ENCODE measurements at regions of chr19 and their contacts with region 1.

Region 1: DNA sequence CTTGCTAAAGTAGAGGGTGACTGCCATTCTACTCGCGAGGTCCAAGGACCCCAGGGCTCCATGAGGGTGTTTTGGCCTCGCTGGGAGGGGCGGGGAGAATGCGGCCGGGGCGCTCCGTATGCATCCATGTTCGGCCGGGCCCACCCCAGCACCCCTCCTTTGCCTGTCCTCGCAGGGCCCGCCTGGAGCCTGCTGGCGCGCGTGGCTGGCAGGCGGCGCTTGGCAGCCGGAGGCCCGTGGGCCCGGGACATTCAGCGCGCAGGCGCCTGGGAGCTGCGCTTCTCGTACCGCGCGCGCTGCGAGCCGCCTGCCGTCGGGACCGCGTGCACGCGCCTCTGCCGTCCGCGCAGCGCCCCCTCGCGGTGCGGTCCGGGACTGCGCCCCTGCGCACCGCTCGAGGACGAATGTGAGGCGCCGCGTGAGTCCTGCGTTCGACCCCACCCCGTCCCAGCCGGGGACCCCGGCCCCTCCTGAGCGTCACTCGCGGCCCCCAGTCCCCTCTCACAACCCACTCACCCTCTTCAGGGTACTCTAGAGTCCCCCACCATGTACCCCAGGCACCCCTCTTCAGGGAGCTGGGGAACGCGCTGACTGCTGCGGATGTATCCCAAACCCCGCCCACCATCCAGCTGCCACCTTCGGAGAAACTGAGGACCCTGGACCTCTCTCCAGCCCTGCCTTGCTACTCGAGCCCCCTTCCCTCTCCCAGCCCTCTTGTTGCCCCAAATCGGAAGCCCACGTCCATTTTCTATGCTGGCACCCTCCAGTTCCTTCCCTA is 4.1 kb downstream of the DLL3 start:
- DNase-seq: peak; percentile 88 to 91 (median 90)
- ATAC-seq: peak; percentile 68
- H3K4me3 ChIP-seq: peak overlapping the region; percentile 33
- H3K27ac ChIP-seq: peak overlapping the region; percentile 50; the same call in 2 of the 3 replicates
- H3K4me1 ChIP-seq: peaks cover 19 to 47% of the 10 kb centered on the region in 2 experiments
- H3K27me3 ChIP-seq: no peaks in the 10 kb centered on the region
- CTCF ChIP-seq: peak; percentile 69 to 94 (median 82)
- EP300 ChIP-seq: no peak
- POLR2A ChIP-seq: no peak
- RAD21 ChIP-seq: peak; percentile 35 to 64; a peak in 3 of 4 replicates

Region 2: DNA sequence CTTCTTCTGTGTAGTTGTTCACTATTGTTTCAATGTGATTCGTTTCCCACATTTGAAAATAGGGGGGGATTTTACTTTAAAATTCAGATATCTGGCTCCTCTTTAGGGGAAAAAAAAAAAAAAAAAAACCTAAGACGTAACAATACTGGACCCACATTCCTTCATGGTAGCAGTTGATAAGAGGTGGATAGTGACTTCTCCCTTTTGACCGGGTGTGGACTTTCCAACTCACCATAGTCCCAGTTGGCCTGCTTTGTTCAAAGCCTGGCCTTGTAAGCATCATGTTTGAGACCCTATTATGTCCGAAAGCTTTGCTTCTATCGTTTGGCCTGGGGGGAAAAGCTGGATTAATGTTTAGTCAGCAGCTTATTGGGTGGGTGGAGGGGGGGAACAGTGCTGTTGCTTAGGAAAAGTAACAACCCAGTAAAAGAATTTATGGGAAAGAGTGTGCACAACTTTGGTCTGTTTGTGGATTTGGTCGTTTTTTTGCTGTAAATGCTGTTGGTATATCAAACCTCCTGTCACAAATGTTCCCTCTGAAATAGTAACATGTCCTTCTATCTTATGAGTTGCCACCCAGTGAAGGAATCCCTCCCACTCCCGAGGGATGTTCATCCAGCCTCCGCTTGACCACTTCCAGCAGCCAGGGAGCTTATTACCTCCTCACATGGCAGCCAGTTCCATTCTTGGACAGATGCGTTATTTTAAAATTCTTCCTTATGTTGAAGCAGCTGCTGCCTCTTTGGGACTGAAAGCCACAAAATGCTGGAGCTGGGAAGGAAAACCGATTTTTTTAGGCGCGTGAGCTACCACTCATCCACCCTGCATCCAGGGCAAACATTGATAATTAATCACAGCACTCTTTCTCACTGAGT is 150.2 kb before region 1 on chr19:
- CTCF ChIA-PET with region 1: no interaction called
- POLR2A ChIA-PET with region 1: no interaction called
- in situ Hi-C with region 1: no loop called
- intact Hi-C with region 1: no loop called
- DNase-seq: peak in 1 of 4 experiments; percentile 34
- ATAC-seq: no peak
- H3K4me3 ChIP-seq: no peak overlapping the region
- H3K27ac ChIP-seq: no peak overlapping the region
- H3K4me1 ChIP-seq: peaks cover 25 to 64% of the 10 kb centered on the region in 2 experiments
- H3K27me3 ChIP-seq: no peaks in the 10 kb centered on the region
- CTCF ChIP-seq: no peak
- EP300 ChIP-seq: no peak
- POLR2A ChIP-seq: no peak
- RAD21 ChIP-seq: no peak

Region 3: DNA sequence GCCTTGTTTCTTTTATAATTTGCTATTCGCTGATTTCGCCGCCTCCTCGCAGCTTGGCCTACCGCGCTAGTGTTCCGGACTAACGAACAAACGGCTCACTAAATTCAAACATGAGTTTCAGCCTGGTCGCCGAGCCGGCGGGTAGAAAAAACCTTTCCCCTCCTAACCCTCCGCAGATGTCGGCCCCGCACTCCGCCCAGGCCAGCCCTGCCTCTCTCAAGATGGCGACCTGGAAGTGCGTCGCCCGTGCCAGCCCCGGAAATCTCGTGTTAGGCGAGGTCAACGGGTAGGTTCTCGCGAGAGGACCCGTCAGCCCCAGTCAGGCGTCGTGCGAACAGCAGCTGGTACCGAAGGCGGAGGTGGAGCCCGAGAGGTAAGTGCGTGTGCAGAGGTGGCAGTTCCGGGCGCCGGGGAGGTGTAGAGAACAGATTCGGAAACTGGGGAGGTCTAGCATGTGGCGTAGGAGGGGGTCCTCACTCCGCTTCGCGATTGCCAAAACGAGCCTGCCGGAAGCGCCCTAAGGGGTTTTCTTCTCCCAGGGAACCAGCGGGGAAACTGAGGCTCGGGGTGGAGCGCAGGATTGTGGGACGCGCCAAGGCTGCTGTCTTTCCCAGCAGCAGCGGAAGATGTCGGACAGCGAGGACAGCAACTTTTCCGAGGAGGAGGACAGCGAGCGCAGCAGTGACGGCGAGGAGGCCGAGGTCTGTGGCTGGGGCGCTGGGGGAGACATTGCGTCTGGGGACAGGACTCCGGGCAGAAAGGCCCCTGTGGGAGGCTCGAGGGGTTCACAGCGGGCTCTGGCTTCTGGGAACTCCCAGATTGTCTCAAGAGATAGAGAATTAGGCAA is 57.3 kb before region 1 on chr19 and contains the start of gene SUPT5H:
- CTCF ChIA-PET with region 1: interaction called, 3 read pairs
- POLR2A ChIA-PET with region 1: interaction called, 4 read pairs
- in situ Hi-C with region 1: no loop called
- intact Hi-C with region 1: loop called (anchors 2 kb)
- DNase-seq: peak; percentile 95 to 99 (median 96)
- ATAC-seq: peak; percentile 99
- H3K4me3 ChIP-seq: peak within 1 kb of the TSS; percentile 71
- H3K27ac ChIP-seq: peak within 1 kb of the TSS; percentile 72
- H3K4me1 ChIP-seq: peaks cover 2 to 22% of the 10 kb centered on the region in 2 experiments; a peak in 3 of 5 replicates
- H3K27me3 ChIP-seq: no peaks in the 10 kb centered on the region
- CTCF ChIP-seq: peak in 1 of 3 experiments; percentile 28; a peak in 1 of 6 replicates
- EP300 ChIP-seq: peak; percentile 41; the same call in 1 of the 2 replicates
- POLR2A ChIP-seq: peak; percentile 88
- RAD21 ChIP-seq: no peak
- polyA plus RNA-seq, gene SUPT5H: 13.3 to 18.8 TPM

Region 4: GRCh38 chr19:39480337-39481228 is 22.2 kb before region 1 on chr19 and contains the start of gene TIMM50:
- CTCF ChIA-PET with region 1: no interaction called
- POLR2A ChIA-PET with region 1: interaction called, 15 read pairs
- in situ Hi-C with region 1: no loop called
- intact Hi-C with region 1: loop called (anchors 2 kb)
- DNase-seq: peak; percentile 91 to 100 (median 94)
- ATAC-seq: peak; percentile 96
- H3K4me3 ChIP-seq: peak within 1 kb of the TSS; percentile 94
- H3K27ac ChIP-seq: peak within 1 kb of the TSS; percentile 92
- H3K4me1 ChIP-seq: peaks cover 10 to 17% of the 10 kb centered on the region in 2 experiments; a peak in 4 of 5 replicates
- H3K27me3 ChIP-seq: no peaks in the 10 kb centered on the region
- CTCF ChIP-seq: peak; percentile 21 to 32 (median 30); a peak in 2 of 6 replicates
- EP300 ChIP-seq: peak; percentile 61
- POLR2A ChIP-seq: peak; percentile 88
- RAD21 ChIP-seq: no peak; a peak in 1 of 4 replicates
- polyA plus RNA-seq, gene TIMM50: 28.3 to 55.4 TPM

Region 5: GRCh38 chr19:39671738-39672363 is 169.0 kb after region 1 on chr19:
- CTCF ChIA-PET with region 1: no interaction called
- POLR2A ChIA-PET with region 1: no interaction called
- in situ Hi-C with region 1: no loop called
- intact Hi-C with region 1: loop called (anchors 5 kb)
- DNase-seq: peak in 2 of 4 experiments; percentile 37 to 58
- ATAC-seq: peak; percentile 83
- H3K4me3 ChIP-seq: no peak overlapping the region
- H3K27ac ChIP-seq: no peak overlapping the region
- H3K4me1 ChIP-seq: no peaks in the 10 kb centered on the region
- H3K27me3 ChIP-seq: no peaks in the 10 kb centered on the region
- CTCF ChIP-seq: peak; percentile 57 to 71 (median 63); a peak in 4 of 6 replicates
- EP300 ChIP-seq: no peak
- POLR2A ChIP-seq: no peak
- RAD21 ChIP-seq: peak; percentile 85 to 87

Measured in K562 (cell line).